Right cardiac atrium (tissue), 5 donors: ENCODE measurements at regions of chr3 and their contacts with region 1.

Region 1: DNA sequence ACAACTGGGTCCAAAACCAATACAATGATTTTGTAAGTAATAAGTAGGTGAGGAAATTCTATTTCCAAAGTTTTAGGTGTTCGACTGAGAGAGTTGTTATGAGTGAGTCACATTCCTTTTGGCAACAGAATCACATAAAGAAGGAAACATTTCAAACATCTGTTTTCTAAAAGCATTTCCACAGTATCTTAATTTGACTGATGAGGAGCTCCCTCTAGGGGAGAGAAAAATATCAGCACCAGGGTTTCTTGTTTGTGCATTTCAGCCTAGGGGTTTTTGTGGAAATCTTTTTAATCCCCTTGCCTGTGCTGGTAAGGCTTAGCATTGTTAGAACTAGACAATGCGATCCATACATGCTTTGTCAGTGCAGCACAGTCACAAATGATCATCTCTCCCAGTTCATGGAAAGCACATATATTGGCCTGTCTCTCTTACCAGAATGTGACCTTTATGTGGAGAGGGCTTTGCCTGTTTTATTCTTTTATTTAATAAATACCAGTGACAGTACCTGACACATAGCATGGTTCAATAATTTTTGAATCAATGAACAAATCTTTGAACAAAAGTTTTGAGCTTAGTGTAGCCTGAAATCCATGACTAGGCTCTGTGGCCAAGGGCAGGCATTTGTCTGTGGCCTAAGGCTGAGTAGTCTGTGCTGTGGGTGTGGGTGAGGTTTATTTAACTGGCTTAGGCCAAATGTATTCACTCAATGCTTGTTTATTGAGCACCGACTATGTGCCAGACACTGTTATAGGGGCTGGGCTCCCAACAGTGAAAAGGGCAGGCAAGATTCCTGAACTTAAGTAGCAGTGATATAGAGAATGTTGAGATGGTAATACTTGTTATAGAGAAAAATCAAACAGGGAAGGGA is 21.1 kb upstream of the IQCF6 start:
- DNase-seq: no peak
- ATAC-seq: peak in 1 of 2 donors; percentile 53
- H3K4me3 ChIP-seq: no peak overlapping the region
- H3K27ac ChIP-seq: no peak overlapping the region
- H3K4me1 ChIP-seq: no peaks in the 10 kb centered on the region
- H3K27me3 ChIP-seq: no peaks in the 10 kb centered on the region

Region 2: DNA sequence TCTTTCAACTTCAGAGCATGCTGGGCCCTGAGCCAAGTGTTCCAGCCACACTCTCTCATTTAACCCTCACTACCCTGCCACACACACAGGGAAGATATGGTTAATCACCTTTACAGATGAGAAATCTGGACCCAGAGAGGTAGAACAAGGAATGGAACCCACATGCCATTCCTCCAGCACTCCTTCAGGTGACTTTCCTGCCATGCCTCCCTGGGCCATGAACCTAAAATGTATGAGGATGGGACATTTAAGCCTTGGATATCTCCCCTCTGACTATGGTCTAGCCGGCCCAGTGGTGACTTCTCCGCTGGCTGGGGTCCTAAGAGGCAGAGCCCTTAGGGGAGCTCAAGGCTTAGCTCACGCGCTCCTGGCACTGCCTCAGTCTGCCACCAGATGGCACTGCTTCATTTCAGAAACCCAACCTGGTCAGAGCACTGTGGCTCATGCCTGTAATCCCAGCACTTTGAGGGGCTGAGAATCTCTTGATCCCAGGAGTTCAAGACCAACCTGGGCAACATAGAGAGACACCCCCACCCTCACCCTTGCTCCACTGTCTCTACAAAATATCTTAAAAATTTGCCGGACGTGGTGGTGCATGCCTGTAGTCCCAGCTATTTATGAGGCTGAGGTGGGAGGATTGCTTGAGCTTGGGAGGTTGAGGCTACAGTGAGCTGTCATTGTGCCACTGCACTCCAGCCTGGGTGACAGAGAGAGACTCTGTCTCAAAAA is 298.1 kb before region 1 on chr3:
- intact Hi-C with region 1: loop called (anchors 5 to 10 kb)
- DNase-seq: peak; percentile 78 to 93 (median 90)
- ATAC-seq: peak; percentile 12 to 21
- H3K4me3 ChIP-seq: no peak overlapping the region
- H3K27ac ChIP-seq: no peak overlapping the region
- H3K4me1 ChIP-seq: no peaks in the 10 kb centered on the region
- H3K27me3 ChIP-seq: no peaks in the 10 kb centered on the region

Region 3: DNA sequence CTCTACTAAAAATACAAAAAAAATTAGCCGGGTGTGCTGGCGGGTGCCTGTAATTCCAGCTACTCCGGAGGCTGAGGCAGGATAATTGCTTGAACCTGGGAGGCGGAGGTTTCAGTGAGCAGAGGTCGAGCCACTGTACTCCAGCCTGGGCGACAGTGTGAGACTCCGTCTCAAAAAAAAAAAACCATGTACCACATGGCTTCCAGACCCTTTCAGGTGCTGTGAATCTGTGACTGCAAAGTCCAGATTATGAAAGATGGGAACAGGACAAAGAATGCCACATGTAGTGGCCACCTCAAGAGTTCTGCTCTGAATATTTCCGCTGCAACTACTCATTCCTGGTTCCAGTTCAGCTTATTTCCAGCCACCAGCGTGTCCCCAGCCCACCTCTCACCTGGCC is 291.9 kb before region 1 on chr3:
- intact Hi-C with region 1: loop called (anchors 5 to 10 kb)
- DNase-seq: no peak
- ATAC-seq: no peak
- H3K4me3 ChIP-seq: no peak overlapping the region
- H3K27ac ChIP-seq: no peak overlapping the region
- H3K4me1 ChIP-seq: no peaks in the 10 kb centered on the region
- H3K27me3 ChIP-seq: no peaks in the 10 kb centered on the region

Region 4: DNA sequence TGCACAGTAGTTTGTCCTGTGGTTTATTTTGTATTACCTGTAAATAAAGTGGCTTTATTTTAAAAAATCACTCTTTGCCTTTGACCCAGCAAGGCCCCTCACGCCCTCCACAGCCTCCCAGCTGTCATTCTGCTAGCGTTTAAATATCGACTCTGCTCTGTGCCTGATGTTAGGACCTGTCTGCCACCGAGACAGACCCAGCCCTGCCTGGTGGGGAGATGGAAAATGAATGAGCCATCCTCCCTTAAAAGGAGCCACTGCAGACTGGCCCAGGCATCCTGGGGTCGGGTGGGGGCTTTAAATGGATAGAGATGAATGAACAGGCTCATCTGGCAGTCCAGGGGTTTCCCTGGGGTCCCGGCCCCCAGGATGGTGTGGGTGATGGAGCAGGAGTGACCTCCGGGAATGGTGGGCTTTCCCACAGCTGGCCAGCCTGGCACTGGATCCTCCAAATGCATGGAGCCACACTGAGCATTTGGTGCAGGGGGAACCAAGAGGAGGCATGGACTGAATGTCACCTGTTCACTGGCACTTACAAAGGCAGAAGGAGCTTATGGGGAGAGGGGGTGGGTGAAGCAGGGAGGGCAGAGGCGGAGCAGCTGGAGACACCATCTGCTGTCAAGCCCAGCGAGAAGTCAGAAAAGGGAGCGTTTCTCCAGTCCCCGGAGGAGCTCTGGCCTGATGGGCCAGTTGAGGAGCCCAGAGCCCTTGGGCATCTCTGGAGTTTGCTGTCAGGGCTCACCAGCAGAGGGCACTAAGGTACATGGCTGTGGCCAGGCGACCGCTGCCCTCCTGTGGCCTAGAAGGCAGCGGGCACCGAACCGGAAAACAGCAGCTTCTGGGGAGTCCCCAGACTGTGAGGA is 81.3 kb before region 1 on chr3:
- intact Hi-C with region 1: loop called in 1 of 4 experiments (anchors 10 kb)
- DNase-seq: peak in 2 of 3 donors; percentile 62 to 84
- ATAC-seq: peak; percentile 46 to 57
- H3K4me3 ChIP-seq: no peak overlapping the region
- H3K27ac ChIP-seq: no peak overlapping the region
- H3K4me1 ChIP-seq: no peaks in the 10 kb centered on the region
- H3K27me3 ChIP-seq: no peaks in the 10 kb centered on the region

Region 5: GRCh38 chr3:51941798-51942602 is 141.9 kb after region 1 on chr3 and contains the starts of genes PARP3 and RRP9:
- intact Hi-C with region 1: no loop called
- DNase-seq: peak; percentile 100
- ATAC-seq: peak; percentile 95 to 96
- H3K4me3 ChIP-seq: peak within 1 kb of the TSS; percentile 62
- H3K27ac ChIP-seq: peak within 1 kb of the TSS; percentile 95
- H3K4me1 ChIP-seq: peaks cover 2% of the 10 kb centered on the region
- H3K27me3 ChIP-seq: no peaks in the 10 kb centered on the region
- total RNA-seq, gene PARP3: 11.6 to 17.4 (median 12.7) TPM
- total RNA-seq, gene RRP9: 7.0 to 13.9 (median 9.1) TPM

Region 6: DNA sequence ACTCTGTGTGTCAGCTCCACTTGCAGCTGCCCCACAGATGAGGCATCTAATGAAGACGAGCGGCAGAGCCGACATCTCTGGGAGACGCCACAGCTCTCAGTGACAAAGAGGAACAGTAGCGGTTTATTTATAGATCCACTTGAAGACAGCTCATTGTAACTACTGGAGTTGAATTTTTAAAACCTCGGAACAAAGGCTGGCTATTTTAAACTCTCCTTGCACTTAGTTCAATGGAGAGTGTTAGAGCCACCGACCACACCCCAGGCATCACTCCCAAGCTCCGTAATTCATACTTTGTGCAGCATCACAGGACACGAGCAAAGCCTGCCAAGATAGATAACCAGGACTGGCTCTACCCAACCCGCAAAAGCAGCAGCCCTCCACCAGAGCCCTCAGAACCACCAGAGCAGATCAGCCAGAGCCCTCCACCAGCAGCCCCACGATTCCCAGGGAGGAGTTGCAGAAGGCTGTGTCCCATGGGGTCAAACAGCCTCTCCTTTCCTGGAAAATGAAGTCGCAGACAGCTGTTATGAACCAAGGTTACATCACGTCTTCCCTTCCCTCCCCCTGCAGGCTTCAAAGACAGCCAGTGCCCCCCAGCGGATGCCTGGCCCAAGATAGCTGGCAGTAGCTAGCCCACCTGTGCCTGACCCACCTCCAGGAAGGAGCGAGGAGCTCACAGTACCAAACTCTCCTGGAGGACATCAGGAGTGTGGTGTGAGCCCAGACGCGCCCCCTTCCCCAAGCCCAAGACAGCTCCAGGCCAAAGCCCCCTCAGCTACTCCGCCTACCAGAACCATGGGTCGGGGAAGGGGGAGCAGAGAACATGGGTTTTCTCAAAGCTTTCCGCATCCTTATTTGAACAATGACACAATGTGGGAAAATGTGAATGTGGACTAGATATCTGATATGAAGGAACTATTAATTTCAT is 308.5 kb after region 1 on chr3:
- intact Hi-C with region 1: no loop called
- DNase-seq: peak; percentile 64 to 85 (median 80)
- ATAC-seq: peak; percentile 73 to 81
- H3K4me3 ChIP-seq: no peak overlapping the region
- H3K27ac ChIP-seq: peak overlapping the region; percentile 89
- H3K4me1 ChIP-seq: peaks cover 14% of the 10 kb centered on the region
- H3K27me3 ChIP-seq: no peaks in the 10 kb centered on the region